Activated CD8-positive, alpha-beta T cell treated with anti-CD3 and anti-CD28 coated beads for 36 hours (primary cell): ENCODE measurements at regions of chr7 and their contacts with region 1.

Region 1: DNA sequence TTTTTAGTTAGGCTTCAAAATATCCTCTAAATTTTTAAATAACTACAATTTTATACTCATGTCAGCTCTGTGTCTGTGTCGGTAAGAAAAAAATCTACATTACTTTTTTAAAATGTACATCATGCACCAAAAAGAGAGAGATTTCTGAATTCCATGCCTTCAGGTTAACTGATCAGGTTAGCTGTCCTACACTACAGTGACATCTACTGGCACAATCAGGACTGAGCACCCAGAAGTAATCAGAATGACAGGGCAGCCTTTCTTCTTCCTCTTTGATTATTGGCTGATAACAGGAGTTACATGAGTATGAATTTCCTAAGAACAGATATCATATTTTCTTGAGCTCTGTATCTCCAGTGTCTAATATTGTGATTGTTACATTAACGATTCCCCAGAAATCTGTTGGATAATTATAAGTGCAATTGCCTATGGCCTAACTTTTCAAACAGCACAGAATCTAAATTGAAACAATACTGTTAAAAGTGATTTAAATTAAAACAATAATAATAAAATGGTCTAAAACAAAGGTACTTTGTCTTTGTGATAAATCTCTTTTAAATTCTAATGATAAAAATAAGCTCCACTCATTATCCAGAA is 41.8 kb upstream of the HYCC1 start:
- DNase-seq: peak; percentile 74
- ATAC-seq: peak; percentile 97
- H3K4me3 Mint-ChIP-seq: no peak overlapping the region
- H3K27ac Mint-ChIP-seq: no peak overlapping the region
- H3K4me1 Mint-ChIP-seq: peaks cover under 1% of the 10 kb centered on the region
- H3K27me3 Mint-ChIP-seq: no peaks in the 10 kb centered on the region
- CTCF ChIP-seq: peak; percentile 96

Region 2: GRCh38 chr7:22782616-22783232 is 273.0 kb before region 1 on chr7:
- CTCF ChIA-PET with region 1: interaction called, 25 read pairs
- POLR2A ChIA-PET with region 1: no interaction called
- intact Hi-C with region 1: no loop called
- DNase-seq: peak; percentile 88
- ATAC-seq: peak; percentile 84
- H3K4me3 Mint-ChIP-seq: no peak overlapping the region
- H3K27ac Mint-ChIP-seq: no peak overlapping the region
- H3K4me1 Mint-ChIP-seq: no peaks in the 10 kb centered on the region
- H3K27me3 Mint-ChIP-seq: peaks cover 2% of the 10 kb centered on the region
- CTCF ChIP-seq: peak; percentile 85

Region 3: DNA sequence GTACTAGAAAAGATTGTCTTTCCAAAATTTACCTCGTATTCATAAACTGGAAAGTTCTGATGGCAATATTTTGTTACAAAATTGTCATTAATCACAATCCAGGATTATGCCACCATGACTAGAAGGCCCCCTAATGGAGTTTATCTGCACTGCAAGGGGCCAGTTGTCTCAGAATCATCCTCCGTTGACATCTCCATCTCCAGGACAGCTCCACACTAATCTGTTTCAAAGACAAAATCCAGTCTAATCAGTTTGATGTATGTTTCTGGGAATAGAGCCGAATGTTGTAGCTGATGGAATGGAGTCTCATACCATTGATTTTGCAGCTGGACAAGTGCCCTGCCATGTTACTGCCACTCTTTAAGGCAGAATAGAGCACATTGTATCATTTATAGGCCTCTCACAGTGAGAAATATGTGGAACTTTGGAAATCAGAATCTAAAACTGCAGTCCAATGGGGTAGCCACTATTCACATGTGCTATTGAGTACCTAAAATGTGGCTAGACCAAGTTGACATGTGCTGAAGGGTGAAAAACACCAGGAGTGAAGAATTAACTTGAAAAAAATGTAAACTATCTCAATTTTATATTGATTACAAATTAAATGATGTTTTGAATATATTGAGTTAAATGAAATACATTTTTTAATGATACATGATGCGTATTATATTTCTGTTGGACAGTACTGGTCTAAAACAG is 194.7 kb before region 1 on chr7:
- CTCF ChIA-PET with region 1: interaction called, 48 read pairs
- POLR2A ChIA-PET with region 1: interaction called, 4 read pairs
- intact Hi-C with region 1: no loop called
- DNase-seq: peak; percentile 48
- ATAC-seq: peak; percentile 67
- H3K4me3 Mint-ChIP-seq: no peak overlapping the region
- H3K27ac Mint-ChIP-seq: no peak overlapping the region
- H3K4me1 Mint-ChIP-seq: peaks cover 58% of the 10 kb centered on the region
- H3K27me3 Mint-ChIP-seq: no peaks in the 10 kb centered on the region
- CTCF ChIP-seq: peak; percentile 77

Region 4: DNA sequence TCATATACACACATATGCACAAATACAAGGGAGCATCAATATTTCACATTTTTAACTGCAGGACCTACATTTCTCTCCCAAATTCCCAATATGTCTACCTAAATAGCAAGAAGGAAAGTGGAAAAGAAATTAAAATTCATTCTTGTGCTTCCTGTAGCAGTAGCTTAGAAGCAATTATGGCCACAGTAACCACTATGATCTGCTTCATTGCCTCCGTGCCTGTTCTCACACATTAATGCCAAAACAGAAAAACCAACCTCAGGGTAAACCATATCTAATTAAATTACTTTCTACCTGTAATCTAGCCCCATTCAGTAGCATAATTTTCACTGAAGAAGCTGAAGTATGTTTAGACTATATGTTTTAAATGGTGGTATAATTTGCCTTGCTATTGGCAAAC is 96.9 kb before region 1 on chr7:
- CTCF ChIA-PET with region 1: interaction called, 12 read pairs
- POLR2A ChIA-PET with region 1: no interaction called
- intact Hi-C with region 1: no loop called
- DNase-seq: no peak
- ATAC-seq: no peak
- H3K4me3 Mint-ChIP-seq: no peak overlapping the region
- H3K27ac Mint-ChIP-seq: no peak overlapping the region
- H3K4me1 Mint-ChIP-seq: no peaks in the 10 kb centered on the region
- H3K27me3 Mint-ChIP-seq: no peaks in the 10 kb centered on the region
- CTCF ChIP-seq: no peak

Region 5: GRCh38 chr7:22992874-22993840 is 62.5 kb before region 1 on chr7:
- CTCF ChIA-PET with region 1: interaction called, 35 read pairs
- POLR2A ChIA-PET with region 1: interaction called, 3 read pairs
- intact Hi-C with region 1: no loop called
- DNase-seq: peak; percentile 79
- ATAC-seq: peak; percentile 58
- H3K4me3 Mint-ChIP-seq: no peak overlapping the region
- H3K27ac Mint-ChIP-seq: peak overlapping the region; percentile 68
- H3K4me1 Mint-ChIP-seq: peaks cover 31% of the 10 kb centered on the region
- H3K27me3 Mint-ChIP-seq: no peaks in the 10 kb centered on the region
- CTCF ChIP-seq: no peak

Region 6: GRCh38 chr7:23043441-23043840 is 12.2 kb before region 1 on chr7:
- CTCF ChIA-PET with region 1: interaction called, 25 read pairs
- POLR2A ChIA-PET with region 1: no interaction called
- intact Hi-C with region 1: no loop called
- DNase-seq: no peak
- ATAC-seq: no peak
- H3K4me3 Mint-ChIP-seq: no peak overlapping the region
- H3K27ac Mint-ChIP-seq: no peak overlapping the region
- H3K4me1 Mint-ChIP-seq: no peaks in the 10 kb centered on the region
- H3K27me3 Mint-ChIP-seq: no peaks in the 10 kb centered on the region
- CTCF ChIP-seq: no peak

Region 7: DNA sequence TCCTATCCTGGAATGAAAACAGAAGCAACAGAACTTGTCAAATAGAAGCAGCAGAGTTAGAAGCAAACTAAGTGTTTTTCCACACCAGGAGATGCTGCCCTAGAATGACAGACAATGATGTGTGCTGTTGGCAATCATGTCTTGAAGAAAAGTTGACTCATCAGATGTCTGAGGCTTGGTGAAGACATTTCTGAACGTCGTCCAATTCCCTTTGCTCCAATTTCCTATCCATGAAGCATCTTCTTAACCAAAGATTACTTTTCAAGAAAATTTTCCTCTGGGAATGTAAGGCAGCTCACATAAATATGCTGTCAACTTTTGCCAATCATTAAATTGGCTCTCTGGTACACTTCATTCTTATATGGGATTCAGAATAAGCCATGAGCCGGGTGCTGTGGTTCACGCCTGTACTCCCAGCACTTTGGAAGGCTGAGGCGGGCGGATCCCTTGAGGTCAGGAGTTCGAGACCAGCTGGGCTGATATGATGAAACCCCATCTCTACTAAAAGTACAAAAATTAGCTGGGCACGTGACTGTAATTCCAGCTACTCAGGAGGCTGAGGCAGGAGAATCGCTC is 278.1 kb after region 1 on chr7:
- CTCF ChIA-PET with region 1: no interaction called
- POLR2A ChIA-PET with region 1: no interaction called
- intact Hi-C with region 1: no loop called
- DNase-seq: no peak
- ATAC-seq: no peak
- H3K4me3 Mint-ChIP-seq: no peak overlapping the region
- H3K27ac Mint-ChIP-seq: no peak overlapping the region
- H3K4me1 Mint-ChIP-seq: no peaks in the 10 kb centered on the region
- H3K27me3 Mint-ChIP-seq: peaks cover 7% of the 10 kb centered on the region
- CTCF ChIP-seq: no peak